SK-N-SH (cell line): ENCODE measurements at regions of chr1 and their contacts with region 1.

Region 1: GRCh38 chr1:74733604-74734484 is 892 bp downstream of the TYW3 start:
- DNase-seq: peak; percentile 60
- H3K4me3 ChIP-seq: peak overlapping the region; percentile 91 to 95
- H3K27ac ChIP-seq: peak overlapping the region; percentile 86 to 98
- H3K4me1 ChIP-seq: peaks cover 12 to 24% of the 10 kb centered on the region in 2 experiments
- H3K27me3 ChIP-seq: no peaks in the 10 kb centered on the region
- CTCF ChIP-seq: peak; percentile 78
- EP300 ChIP-seq: no peak
- RAD21 ChIP-seq: peak; percentile 72

Region 2: GRCh38 chr1:74712881-74713280 is 21.0 kb before region 1 on chr1:
- CTCF ChIA-PET with region 1: interaction called, 10 read pairs
- POLR2A ChIA-PET with region 1: no interaction called
- DNase-seq: no peak
- H3K4me3 ChIP-seq: no peak overlapping the region
- H3K27ac ChIP-seq: no peak overlapping the region; a peak in 1 of 4 replicates
- H3K4me1 ChIP-seq: no peaks in the 10 kb centered on the region; a peak in 1 of 4 replicates
- H3K27me3 ChIP-seq: no peaks in the 10 kb centered on the region
- CTCF ChIP-seq: no peak
- EP300 ChIP-seq: no peak
- RAD21 ChIP-seq: no peak

Region 3: GRCh38 chr1:74748960-74749359 is 15.1 kb after region 1 on chr1:
- CTCF ChIA-PET with region 1: interaction called, 13 read pairs
- POLR2A ChIA-PET with region 1: no interaction called
- DNase-seq: no peak
- H3K4me3 ChIP-seq: no peak overlapping the region
- H3K27ac ChIP-seq: no peak overlapping the region
- H3K4me1 ChIP-seq: no peaks in the 10 kb centered on the region
- H3K27me3 ChIP-seq: no peaks in the 10 kb centered on the region
- CTCF ChIP-seq: no peak
- EP300 ChIP-seq: no peak
- RAD21 ChIP-seq: no peak